ENCODE measurements at regions of chr6 and their contacts with region 1.

Region 1: DNA sequence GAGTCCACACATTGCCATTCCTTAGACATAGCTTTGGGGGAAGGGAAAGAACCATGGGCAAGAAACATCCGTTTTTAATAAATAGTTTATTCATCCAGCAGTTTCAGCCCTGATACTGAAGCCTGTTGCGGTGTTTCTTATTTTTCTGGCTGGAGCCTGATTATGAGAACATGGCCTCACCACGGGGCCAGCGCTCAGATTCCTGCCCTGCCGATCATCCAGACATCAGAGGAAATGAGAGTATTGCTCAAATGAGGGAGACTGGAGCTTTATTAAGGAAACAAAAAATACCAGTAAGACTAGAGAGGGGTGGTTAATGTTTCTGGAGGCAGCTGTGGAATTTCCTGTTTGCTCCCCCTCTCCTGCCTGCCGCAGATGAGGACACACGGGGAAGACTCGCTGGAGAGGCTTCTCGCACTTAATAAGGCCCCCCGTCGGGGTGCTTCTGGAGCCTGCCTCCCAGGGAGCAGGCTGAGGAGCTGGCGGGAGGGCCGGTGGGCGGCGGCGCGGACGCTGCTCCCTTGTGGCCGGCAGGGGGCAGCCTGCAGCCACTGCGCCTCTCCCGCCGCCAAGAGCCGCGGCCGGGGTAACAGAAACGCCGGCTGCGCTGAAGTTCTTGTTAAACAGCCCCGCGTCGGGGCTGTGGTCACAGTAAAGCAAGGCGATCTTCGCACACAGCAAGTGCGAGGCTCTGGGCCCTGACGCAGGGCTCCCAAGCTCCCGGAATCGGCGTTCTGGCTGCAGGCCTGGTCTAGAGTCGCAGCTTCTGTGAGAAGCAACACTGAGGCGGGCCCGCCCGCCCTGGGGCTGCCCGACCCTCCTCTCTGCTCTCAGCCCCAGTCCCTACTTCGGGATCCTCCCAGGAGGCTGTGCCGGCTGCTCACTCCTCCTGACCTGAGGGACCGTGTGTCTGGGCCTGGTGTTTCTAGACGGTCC is 17.5 kb downstream of the LEMD2 start:
- DNase-seq: peak; percentile 65 to 88 (median 75)
- ATAC-seq: peak; percentile 44 to 85 (median 76)
- H3K4me3 ChIP-seq: peak overlapping the region in 4 of 12 donors; percentile 8 to 28 (median 18)
- H3K27ac ChIP-seq: peak overlapping the region in 11 of 12 donors; percentile 2 to 74 (median 50)
- H3K4me1 ChIP-seq: peaks cover 0 to 37% (median 27%) of the 10 kb centered on the region in 12 donors
- H3K27me3 ChIP-seq: no peaks in the 10 kb centered on the region
- CTCF ChIP-seq: peak; percentile 92 to 99 (median 97)
- POLR2A ChIP-seq: no peak

Region 2: DNA sequence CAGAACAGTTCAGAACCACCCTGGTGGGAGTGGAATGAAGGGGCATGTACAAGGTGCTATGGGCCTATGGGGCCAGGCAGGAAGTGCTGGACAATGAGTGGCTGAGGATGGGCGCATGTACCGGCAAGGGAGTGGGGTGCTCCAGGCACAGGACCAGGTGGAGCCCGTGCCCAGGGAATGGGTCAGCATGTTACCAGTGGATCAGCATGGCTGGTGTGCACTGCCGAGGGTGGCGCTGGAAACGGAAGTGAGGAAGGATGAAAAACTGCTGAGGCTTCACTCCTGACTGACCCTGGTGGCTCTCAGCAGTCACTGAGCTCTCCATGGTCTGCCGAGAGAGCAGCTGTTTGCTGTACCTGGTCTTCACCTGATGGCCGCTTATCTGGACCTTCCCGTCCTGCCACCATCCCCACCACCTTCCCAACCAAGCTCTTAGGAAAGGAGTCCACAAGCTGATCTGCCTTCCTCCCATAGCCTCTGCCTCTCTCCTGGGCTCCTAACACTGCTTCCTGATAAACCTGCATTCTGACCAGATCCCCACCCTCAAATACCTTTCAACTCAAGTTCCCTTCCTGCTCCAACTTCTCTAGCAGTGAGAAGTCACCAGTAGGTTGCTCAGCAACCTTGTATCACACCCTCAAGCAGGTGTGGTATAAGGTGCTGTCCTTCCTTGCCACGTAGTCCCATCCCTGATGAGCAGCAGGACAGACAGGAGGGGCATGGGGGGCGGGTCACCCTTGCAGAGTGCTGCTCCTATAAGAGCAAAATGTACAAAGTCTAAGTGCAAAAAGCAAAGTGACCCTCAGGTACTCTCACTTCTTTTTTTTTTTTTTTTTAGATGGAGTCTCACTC is 67.0 kb before region 1 on chr6:
- intact Hi-C with region 1: no loop called
- DNase-seq: peak in 1 of 5 donors; percentile 18
- ATAC-seq: no peak
- H3K4me3 ChIP-seq: no peak overlapping the region
- H3K27ac ChIP-seq: no peak overlapping the region
- H3K4me1 ChIP-seq: peaks cover 0 to 41% (median 15%) of the 10 kb centered on the region in 12 donors
- H3K27me3 ChIP-seq: no peaks in the 10 kb centered on the region
- CTCF ChIP-seq: no peak
- POLR2A ChIP-seq: no peak

Region 3: DNA sequence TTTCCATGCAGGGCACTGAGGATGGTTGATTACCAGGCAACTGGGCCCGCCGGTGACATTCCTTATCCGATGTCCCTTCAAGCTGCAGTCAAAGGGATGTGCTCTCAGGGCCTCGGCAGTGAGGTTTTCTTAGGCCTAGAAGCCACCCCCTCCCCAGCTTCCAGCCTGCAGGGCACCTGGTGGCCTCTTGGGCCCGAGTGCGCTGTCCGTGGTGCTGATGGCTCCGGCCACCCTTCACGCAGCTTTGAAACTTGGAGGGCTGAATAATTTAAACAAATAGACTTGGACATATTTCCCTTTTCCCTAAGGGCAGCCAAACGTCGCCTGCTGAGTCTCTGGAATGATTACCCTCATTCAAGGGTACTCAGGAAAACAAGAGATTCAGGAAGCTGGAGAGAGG is 41.3 kb after region 1 on chr6:
- intact Hi-C with region 1: loop called in 1 of 10 experiments (anchors 5 kb)
- DNase-seq: peak in 4 of 5 donors; percentile 25 to 49 (median 36)
- ATAC-seq: peak in 3 of 4 donors; percentile 48 to 62 (median 49)
- H3K4me3 ChIP-seq: no peak overlapping the region
- H3K27ac ChIP-seq: no peak overlapping the region
- H3K4me1 ChIP-seq: peaks cover 0 to 13% (median 8%) of the 10 kb centered on the region in 12 donors
- H3K27me3 ChIP-seq: peaks cover 2 to 51% (median 25%) of the 10 kb centered on the region in 9 donors
- CTCF ChIP-seq: peak in 6 of 12 donors; percentile 15 to 51 (median 29)
- POLR2A ChIP-seq: no peak

Region 4: DNA sequence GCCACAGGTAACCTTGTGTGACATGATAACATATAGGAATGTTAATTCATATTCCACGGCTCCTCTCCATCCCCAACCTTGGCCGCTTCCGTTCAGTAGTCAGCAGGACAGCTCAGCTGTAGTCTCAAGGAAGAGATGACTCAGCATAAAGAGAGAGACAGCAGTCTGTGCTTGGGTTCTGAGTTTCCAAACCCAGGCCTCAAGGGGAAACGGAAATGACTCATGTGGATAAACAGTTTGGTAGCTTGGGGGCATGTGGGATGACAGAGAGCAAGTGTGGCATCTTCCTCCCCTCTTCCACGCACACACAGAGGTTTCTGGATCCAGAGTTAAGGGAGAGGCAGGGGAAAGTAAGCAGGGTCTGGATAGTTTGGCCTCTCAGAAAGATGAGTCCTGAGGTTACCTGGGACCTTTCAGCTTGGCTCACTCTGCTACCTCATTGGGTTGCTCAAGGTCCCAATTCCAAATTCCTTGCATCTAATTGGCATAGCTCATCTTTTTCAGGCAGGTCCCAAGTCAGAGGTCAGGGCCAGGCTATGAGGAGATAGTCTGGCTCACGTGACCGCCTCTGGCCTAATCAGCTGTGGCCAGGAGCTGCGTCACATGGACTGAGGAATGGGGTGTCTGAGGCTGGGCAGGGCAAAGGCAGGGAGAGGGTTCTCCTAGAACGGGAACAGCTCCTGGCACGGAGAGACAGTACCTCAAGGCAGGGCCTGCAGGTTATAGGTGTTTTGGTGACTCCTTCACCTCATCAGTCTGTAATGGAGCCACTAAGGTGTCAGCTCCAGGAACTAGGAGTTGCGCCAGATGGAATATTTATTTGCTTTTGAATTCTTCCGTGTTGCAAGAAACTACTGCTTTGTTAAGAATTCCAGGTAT is 68.9 kb after region 1 on chr6:
- intact Hi-C with region 1: no loop called
- DNase-seq: peak in 3 of 5 donors; percentile 35 to 41 (median 39)
- ATAC-seq: peak in 3 of 4 donors; percentile 78 to 85 (median 84)
- H3K4me3 ChIP-seq: no peak overlapping the region
- H3K27ac ChIP-seq: peak overlapping the region in 1 of 12 donors; percentile 56
- H3K4me1 ChIP-seq: peaks cover 0 to 19% (median 2%) of the 10 kb centered on the region in 12 donors
- H3K27me3 ChIP-seq: peaks cover 0 to 6% (median 0%) of the 10 kb centered on the region in 9 donors
- CTCF ChIP-seq: no peak
- POLR2A ChIP-seq: no peak

Region 5: DNA sequence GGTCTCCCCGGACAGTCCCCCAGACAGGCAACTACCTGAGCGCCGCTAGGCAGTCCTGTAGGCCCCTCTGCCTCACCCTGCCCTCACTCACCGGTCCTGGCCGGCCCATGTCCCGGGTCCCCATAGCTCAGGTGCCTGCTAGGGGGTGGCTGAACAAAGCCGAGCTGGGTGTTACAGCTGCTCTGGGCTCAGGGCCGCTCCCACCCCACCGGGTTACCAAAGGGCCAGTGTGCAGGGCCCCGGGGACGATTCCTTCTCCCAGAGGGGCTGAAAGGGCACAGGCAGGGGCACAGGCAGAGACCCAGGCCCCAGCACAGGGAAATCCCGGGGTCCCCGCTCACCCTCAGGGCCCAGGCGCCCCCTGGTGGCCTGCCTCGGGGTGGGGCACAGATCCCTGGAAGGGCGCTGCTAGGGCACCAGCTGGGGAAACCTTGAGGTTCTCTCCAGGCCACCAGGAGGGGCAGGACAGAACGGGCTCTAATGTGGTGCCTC is 256.1 kb after region 1 on chr6:
- intact Hi-C with region 1: loop called (anchors 2 to 5 kb)
- DNase-seq: peak; percentile 24 to 75 (median 39)
- ATAC-seq: peak in 3 of 4 donors; percentile 44 to 76 (median 61)
- H3K4me3 ChIP-seq: no peak overlapping the region
- H3K27ac ChIP-seq: no peak overlapping the region
- H3K4me1 ChIP-seq: no peaks in the 10 kb centered on the region
- H3K27me3 ChIP-seq: peaks cover 0 to 49% (median 6%) of the 10 kb centered on the region in 9 donors
- CTCF ChIP-seq: peak; percentile 57 to 87 (median 72)
- POLR2A ChIP-seq: no peak

Region 6: GRCh38 chr6:34145161-34146020 is 374.0 kb after region 1 on chr6:
- intact Hi-C with region 1: loop called in 3 of 10 experiments (anchors 2 to 5 kb)
- DNase-seq: peak in 2 of 5 donors; percentile 24 to 64
- ATAC-seq: peak in 3 of 4 donors; percentile 38 to 51 (median 44)
- H3K4me3 ChIP-seq: peak overlapping the region; percentile 16 to 52 (median 40)
- H3K27ac ChIP-seq: no peak overlapping the region
- H3K4me1 ChIP-seq: peaks cover 2 to 37% (median 16%) of the 10 kb centered on the region in 12 donors
- H3K27me3 ChIP-seq: peaks cover 41 to 84% (median 55%) of the 10 kb centered on the region in 9 donors
- CTCF ChIP-seq: no peak
- POLR2A ChIP-seq: no peak

Region 7: GRCh38 chr6:34154668-34155447 is 383.4 kb after region 1 on chr6:
- intact Hi-C with region 1: loop called (anchors 1 to 5 kb)
- DNase-seq: peak in 4 of 5 donors; percentile 31 to 79 (median 48)
- ATAC-seq: peak; percentile 22 to 86 (median 75)
- H3K4me3 ChIP-seq: peak overlapping the region in 6 of 12 donors; percentile 5 to 30 (median 20)
- H3K27ac ChIP-seq: no peak overlapping the region
- H3K4me1 ChIP-seq: peaks cover 0 to 11% (median 5%) of the 10 kb centered on the region in 12 donors
- H3K27me3 ChIP-seq: peaks cover 12 to 62% (median 55%) of the 10 kb centered on the region in 9 donors
- CTCF ChIP-seq: peak; percentile 92 to 98 (median 96)
- POLR2A ChIP-seq: no peak